PC-9 (cell line): ENCODE measurements at regions of chr10 and their contacts with region 1.

Region 1: DNA sequence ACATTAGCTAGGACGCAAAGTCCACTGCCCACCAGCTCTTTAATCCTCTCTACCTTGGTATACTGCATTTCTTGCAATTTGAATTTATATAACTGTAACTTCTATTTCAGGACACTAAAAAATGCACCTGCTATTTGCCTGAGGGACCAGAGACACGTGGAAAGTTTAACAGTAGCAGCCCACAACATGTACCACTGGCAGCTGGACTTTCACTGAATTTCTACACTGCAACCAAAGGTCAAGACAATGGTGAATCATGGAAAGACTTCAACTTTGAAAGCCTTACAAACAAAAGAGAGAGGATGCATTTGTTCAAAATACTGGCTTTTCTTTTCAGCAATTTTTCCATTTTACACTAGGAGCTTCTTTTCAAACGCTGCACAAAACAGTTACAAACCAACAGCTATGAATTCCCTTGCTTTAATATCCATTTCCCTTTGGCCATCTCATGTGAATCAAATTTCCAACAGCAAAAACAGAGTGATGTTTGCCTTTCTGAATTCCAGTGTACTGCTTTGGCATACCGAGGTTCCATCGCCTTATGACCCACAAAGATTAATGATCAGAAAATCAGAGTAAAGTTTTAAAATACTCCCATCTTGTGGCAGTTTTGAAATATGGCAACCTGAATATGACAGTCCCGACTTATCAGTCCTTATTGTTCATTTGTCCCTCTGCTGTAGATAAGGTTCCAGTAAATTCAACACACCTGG is 29.9 kb upstream of the HNRNPH3 start:
- DNase-seq: peak; percentile 9 to 80
- H3K4me3 ChIP-seq: no peak overlapping the region
- H3K27ac ChIP-seq: no peak overlapping the region
- H3K4me1 ChIP-seq: peaks cover 14% of the 10 kb centered on the region
- H3K27me3 ChIP-seq: no peaks in the 10 kb centered on the region
- CTCF ChIP-seq: peak; percentile 81

Region 2: GRCh38 chr10:67697724-67698131 is 604.2 kb before region 1 on chr10:
- CTCF ChIA-PET with region 1: interaction called, 3 read pairs
- POLR2A ChIA-PET with region 1: no interaction called
- intact Hi-C with region 1: loop called (anchors 5 kb)
- DNase-seq: peak; percentile 14 to 51
- H3K4me3 ChIP-seq: no peak overlapping the region
- H3K27ac ChIP-seq: no peak overlapping the region
- H3K4me1 ChIP-seq: no peaks in the 10 kb centered on the region
- H3K27me3 ChIP-seq: peaks cover 46% of the 10 kb centered on the region
- CTCF ChIP-seq: peak; percentile 80

Region 3: DNA sequence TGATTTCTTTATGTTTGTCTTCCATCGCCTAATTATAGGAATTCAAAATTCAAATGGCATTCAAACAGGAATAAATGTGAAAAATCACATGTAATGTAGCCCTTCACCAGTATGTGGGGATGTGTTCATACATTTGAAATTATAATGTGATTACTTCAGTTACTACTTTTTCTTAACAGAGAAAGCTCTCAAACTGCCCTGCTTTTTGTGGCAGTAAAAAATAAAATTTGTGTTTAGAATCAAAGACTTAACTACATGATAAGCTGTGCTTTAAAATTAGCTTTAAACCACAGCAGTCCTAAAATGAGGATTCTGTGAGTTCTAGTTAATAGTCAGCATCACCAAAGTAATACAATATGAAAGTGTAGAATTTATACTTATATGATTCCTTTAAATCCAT is 219.1 kb before region 1 on chr10:
- CTCF ChIA-PET with region 1: interaction called, 3 read pairs
- POLR2A ChIA-PET with region 1: no interaction called
- intact Hi-C with region 1: loop called (anchors 1 kb)
- DNase-seq: no peak
- H3K4me3 ChIP-seq: no peak overlapping the region
- H3K27ac ChIP-seq: peak overlapping the region; percentile 10; the same call in 1 of the 2 replicates
- H3K4me1 ChIP-seq: peaks cover 53% of the 10 kb centered on the region
- H3K27me3 ChIP-seq: no peaks in the 10 kb centered on the region
- CTCF ChIP-seq: peak; percentile 80

Region 4: DNA sequence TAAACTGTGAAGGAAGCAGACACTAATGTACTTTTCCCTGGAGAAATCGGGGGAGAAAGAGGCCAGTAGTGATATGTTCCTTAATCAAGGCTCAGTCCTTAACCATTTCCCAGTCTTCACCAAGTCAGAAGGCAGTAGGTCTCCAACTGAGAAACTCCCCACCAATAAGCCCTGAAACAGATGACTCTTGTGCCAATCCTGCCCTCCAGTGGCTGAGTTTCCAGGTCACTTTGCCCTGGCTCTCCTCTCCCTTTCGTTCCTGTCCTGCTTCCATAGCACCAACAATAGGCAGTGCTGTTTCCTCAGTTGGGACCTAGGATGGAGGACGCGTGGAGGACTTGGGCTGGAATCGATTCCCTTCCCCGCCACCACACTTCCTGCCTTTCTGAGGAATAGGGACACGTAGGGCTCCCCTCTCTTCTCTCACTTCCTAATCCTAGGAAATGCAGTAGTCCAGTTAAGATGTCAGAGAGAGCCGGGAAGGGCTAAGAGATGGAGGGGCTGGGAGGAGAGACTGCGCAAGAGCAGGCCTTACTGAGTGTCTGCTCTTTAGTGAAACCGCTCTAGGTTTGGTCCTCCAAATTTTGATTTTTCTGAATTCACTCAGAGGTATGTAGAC is 93.4 kb before region 1 on chr10:
- CTCF ChIA-PET with region 1: interaction called, 24 read pairs
- POLR2A ChIA-PET with region 1: no interaction called
- intact Hi-C with region 1: loop called (anchors 1 kb)
- DNase-seq: peak; percentile 63 to 78
- H3K4me3 ChIP-seq: no peak overlapping the region
- H3K27ac ChIP-seq: no peak overlapping the region
- H3K4me1 ChIP-seq: peaks cover 7% of the 10 kb centered on the region
- H3K27me3 ChIP-seq: no peaks in the 10 kb centered on the region
- CTCF ChIP-seq: peak; percentile 82

Region 5: DNA sequence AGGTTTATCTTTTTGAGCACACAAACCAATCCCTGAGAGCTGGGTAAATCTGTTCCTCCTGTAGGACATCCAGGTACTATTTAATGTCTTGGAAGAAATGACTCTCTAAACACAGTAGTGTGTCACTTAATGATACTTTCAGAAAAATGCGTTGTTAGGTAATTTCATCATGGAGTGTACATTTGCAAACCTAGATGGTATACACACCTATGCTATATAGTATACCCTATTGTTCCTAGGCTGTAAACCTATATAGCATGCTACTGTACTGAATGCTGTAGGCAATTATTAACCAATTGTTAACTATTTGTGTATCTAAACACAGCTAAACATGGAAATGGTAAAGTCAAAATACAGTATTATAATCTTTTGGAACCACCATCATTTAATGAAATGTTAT is 95.1 kb after region 1 on chr10:
- CTCF ChIA-PET with region 1: no interaction called
- POLR2A ChIA-PET with region 1: no interaction called
- intact Hi-C with region 1: no loop called
- DNase-seq: no peak
- H3K4me3 ChIP-seq: no peak overlapping the region
- H3K27ac ChIP-seq: no peak overlapping the region
- H3K4me1 ChIP-seq: no peaks in the 10 kb centered on the region
- H3K27me3 ChIP-seq: no peaks in the 10 kb centered on the region
- CTCF ChIP-seq: no peak